HCT116 (cell line): ENCODE measurements at regions of chr12 and their contacts with region 1.

Region 1: GRCh38 chr12:122946690-122947341 is 19.4 kb downstream of the ABCB9 start:
- DNase-seq: peak; percentile 92
- ATAC-seq: peak; percentile 77
- H3K4me3 ChIP-seq: no peak overlapping the region
- H3K27ac ChIP-seq: peak overlapping the region; percentile 70
- H3K4me1 ChIP-seq: peaks cover 56 to 80% of the 10 kb centered on the region in 2 experiments
- H3K27me3 ChIP-seq: no peaks in the 10 kb centered on the region
- CTCF ChIP-seq: peak in 2 of 3 experiments; percentile 46 to 53; a peak in 4 of 6 replicates
- POLR2A ChIP-seq: no peak
- RAD21 ChIP-seq: no peak

Region 2: DNA sequence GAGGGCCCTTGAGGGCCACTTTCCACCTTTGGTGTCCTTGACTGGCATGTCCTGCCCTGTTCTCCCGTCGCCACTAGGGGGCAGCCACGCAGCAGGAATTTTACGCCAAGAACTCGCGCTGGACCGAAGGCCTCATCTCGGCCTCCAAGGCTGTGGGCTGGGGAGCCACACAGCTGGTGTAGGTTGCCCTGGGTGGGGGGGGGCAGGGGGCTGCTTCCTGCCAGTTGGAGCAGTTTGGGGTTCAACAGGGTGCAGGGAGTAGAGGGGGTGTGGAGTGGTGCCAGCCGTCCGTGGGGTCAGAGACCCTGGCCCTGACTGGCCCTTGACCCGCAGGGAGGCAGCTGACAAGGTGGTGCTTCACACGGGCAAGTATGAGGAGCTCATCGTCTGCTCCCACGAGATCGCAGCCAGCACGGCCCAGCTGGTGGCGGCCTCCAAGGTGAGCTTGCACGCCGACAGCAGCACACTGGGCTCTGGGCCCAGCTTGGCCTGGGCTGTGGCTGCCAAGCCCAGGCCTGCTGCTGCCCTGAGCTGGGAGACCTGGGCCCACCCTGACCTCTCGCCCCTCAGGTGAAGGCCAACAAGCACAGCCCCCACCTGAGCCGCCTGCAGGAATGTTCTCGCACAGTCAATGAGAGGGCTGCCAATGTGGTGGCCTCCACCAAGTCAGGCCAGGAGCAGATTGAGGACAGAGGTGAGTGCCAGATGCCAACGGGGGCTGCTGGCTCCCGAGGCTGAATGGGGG is 86.3 kb before region 1 on chr12:
- CTCF ChIA-PET with region 1: interaction called, 17 read pairs
- POLR2A ChIA-PET with region 1: interaction called, 5 read pairs
- RAD21 ChIA-PET with region 1: interaction called in 1 of 2 experiments, 3 read pairs
- intact Hi-C with region 1: loop called (anchors 1 kb)
- DNase-seq: peak; percentile 50
- ATAC-seq: peak; percentile 74
- H3K4me3 ChIP-seq: no peak overlapping the region
- H3K27ac ChIP-seq: no peak overlapping the region
- H3K4me1 ChIP-seq: no peaks in the 10 kb centered on the region
- H3K27me3 ChIP-seq: no peaks in the 10 kb centered on the region
- CTCF ChIP-seq: peak; percentile 87 to 94 (median 87)
- POLR2A ChIP-seq: no peak
- RAD21 ChIP-seq: peak; percentile 96

Region 3: GRCh38 chr12:122888232-122888867 is 58.5 kb before region 1 on chr12:
- CTCF ChIA-PET with region 1: interaction called, 4 read pairs
- POLR2A ChIA-PET with region 1: interaction called, 14 read pairs
- RAD21 ChIA-PET with region 1: interaction called in 1 of 2 experiments, 3 read pairs
- intact Hi-C with region 1: no loop called
- DNase-seq: peak; percentile 81
- ATAC-seq: peak; percentile 65
- H3K4me3 ChIP-seq: peak overlapping the region; percentile 26 to 53
- H3K27ac ChIP-seq: peak overlapping the region; percentile 82
- H3K4me1 ChIP-seq: peaks cover 70 to 95% of the 10 kb centered on the region in 2 experiments
- H3K27me3 ChIP-seq: no peaks in the 10 kb centered on the region
- CTCF ChIP-seq: no peak
- POLR2A ChIP-seq: no peak
- RAD21 ChIP-seq: no peak

Region 4: DNA sequence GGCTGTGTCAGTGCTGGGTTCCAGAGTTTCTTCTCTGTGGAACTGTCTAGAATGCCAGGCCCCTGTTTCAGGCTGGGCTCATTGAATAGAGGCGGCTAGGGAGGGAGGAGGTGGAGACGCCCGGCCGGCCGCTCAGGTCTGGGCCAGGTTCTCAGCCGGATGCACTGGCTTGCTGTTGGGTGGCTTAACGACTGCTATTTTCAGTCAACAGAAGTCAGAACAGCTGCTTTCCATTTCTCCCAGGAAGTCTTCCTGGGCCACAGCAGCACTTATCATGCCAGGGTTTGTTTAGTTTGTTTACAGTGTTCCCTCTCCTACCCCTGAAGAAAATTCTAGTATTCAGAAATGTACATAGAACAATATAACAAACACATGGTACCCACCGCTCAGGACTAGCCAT is 24.9 kb before region 1 on chr12:
- CTCF ChIA-PET with region 1: no interaction called
- POLR2A ChIA-PET with region 1: interaction called, 9 read pairs
- RAD21 ChIA-PET with region 1: interaction called in 1 of 2 experiments, 3 read pairs
- intact Hi-C with region 1: loop called (anchors 2 kb)
- DNase-seq: no peak
- ATAC-seq: no peak
- H3K4me3 ChIP-seq: no peak overlapping the region
- H3K27ac ChIP-seq: no peak overlapping the region
- H3K4me1 ChIP-seq: peaks cover 45 to 74% of the 10 kb centered on the region in 2 experiments
- H3K27me3 ChIP-seq: no peaks in the 10 kb centered on the region
- CTCF ChIP-seq: no peak
- POLR2A ChIP-seq: no peak
- RAD21 ChIP-seq: no peak